OCI-LY7 (cell line): ENCODE measurements at regions of chr13 and their contacts with region 1.

Region 1: DNA sequence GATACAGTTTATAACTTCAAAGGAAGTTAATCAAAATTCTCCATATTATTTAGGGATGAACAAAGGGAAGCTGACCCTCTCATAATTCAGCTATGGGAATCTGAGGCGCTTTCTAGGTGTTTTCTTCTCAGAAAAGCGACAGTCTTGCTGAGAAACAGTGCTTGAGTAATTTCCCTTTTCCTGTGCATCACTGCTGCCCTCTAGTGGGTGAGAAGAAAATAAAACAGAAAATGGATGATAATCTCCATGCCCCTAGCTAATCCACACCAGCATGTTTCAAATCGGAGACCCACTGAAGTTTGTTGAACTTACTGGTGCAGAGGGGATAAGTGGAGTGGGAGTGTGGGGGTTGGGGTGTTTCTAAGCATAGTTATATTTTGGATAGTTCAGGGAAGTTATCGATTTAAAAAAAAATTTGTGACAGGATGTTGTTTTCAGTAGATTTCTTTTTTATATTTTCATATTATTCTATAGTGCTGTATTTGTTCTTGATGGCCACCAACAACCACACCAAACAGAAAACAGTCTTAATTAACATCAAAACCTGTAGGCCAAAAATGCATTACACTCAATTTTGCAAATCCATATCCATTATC is 21.4 kb downstream of the LCP1 start:
- DNase-seq: peak; percentile 69
- H3K4me3 ChIP-seq: no peak overlapping the region
- H3K27ac ChIP-seq: no peak overlapping the region
- H3K4me1 ChIP-seq: peaks cover 32% of the 10 kb centered on the region
- CTCF ChIP-seq: peak; percentile 93

Region 2: DNA sequence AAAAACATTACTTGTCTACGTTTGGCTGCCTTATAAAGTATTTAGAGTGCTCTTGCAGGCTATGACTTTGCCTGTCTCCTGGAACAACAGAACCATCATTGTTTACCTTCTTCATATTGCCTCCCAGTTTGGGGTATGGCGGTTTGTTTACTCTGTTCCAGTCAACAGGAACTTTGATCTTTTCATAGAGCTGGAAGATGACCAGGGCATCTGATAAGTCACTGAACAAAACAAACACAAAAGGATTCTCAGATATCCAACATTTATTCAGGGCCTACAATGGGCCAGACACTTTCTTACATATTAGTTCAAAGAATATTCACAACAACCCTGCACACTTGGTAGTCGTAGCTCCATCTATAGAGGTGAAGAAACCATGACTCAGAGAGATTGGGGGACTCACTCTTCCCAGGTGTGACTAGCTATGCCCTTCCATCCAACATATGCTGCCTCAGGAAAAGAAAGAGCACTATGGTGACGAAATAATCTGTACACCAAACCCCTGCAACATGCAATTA is 17.3 kb before region 1 on chr13:
- CTCF ChIA-PET with region 1: no interaction called
- POLR2A ChIA-PET with region 1: interaction called, 10 read pairs
- intact Hi-C with region 1: loop called (anchors 2 kb)
- DNase-seq: no peak
- H3K4me3 ChIP-seq: no peak overlapping the region
- H3K27ac ChIP-seq: no peak overlapping the region
- H3K4me1 ChIP-seq: no peaks in the 10 kb centered on the region
- CTCF ChIP-seq: no peak

Region 3: DNA sequence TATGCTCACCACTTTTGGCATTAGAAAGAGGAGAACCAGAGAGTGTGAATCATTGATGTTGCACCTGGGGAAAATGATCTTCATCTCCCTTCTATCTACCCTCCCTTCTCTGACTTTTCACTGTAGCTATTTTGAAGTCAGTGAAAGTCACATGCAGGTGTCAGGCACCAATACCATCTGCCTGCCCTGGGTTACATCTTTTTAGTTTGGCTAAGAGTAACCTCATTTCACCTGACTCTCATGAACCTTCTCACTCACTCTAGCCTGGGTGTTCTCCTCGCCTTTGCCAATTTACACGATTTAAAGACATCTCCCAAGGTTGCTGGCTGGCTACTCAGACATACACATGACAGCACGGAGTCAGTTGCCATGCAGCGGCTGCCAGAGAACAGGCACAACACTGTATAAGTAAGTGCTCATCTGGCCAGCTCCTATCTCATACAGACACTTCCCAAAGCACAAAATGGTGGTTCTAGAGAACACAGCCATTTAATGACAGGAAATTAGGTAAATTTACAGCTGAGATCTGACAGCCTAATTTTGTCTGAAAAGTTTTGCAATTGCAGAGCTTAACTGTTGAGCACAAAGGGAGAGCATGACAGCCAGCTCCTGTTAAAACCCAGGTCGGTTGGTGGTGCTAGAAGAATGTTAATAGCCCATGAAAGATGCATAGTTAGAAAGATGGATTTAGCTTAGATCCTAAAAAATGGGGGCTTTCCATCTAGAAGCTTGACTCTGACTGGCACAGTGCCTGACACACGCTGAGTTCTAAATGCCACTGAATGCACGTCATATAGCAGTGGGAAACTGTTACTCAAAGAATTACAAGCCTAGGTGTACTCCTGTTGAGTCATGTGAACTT is 11.1 kb before region 1 on chr13:
- CTCF ChIA-PET with region 1: no interaction called
- POLR2A ChIA-PET with region 1: interaction called, 10 read pairs
- intact Hi-C with region 1: no loop called
- DNase-seq: no peak
- H3K4me3 ChIP-seq: no peak overlapping the region
- H3K27ac ChIP-seq: no peak overlapping the region
- H3K4me1 ChIP-seq: no peaks in the 10 kb centered on the region
- CTCF ChIP-seq: no peak